ENCODE measurements at regions of chr17 and their contacts with region 1.

Region 1: GRCh38 chr17:43211480-43212402 is at the start of gene TMEM106A:
- DNase-seq: peak; percentile 80
- ATAC-seq: peak; percentile 90
- H3K4me3 Mint-ChIP-seq: peak within 1 kb of the TSS; percentile 98
- H3K27ac Mint-ChIP-seq: peak within 1 kb of the TSS; percentile 94
- H3K4me1 Mint-ChIP-seq: peaks cover 18% of the 10 kb centered on the region
- H3K27me3 Mint-ChIP-seq: no peaks in the 10 kb centered on the region
- total RNA-seq, gene TMEM106A: 20.3 TPM

Region 2: GRCh38 chr17:42985225-42985624 is 226.5 kb before region 1 on chr17:
- POLR2A ChIA-PET with region 1: no interaction called
- DNase-seq: no peak
- ATAC-seq: no peak
- H3K4me3 Mint-ChIP-seq: no peak overlapping the region
- H3K27ac Mint-ChIP-seq: no peak overlapping the region
- H3K4me1 Mint-ChIP-seq: peaks cover 24% of the 10 kb centered on the region
- H3K27me3 Mint-ChIP-seq: no peaks in the 10 kb centered on the region

Region 3: GRCh38 chr17:43042025-43042628 is 169.6 kb before region 1 on chr17:
- POLR2A ChIA-PET with region 1: no interaction called
- DNase-seq: no peak
- ATAC-seq: no peak
- H3K4me3 Mint-ChIP-seq: no peak overlapping the region
- H3K27ac Mint-ChIP-seq: peak overlapping the region; percentile 17
- H3K4me1 Mint-ChIP-seq: no peaks in the 10 kb centered on the region
- H3K27me3 Mint-ChIP-seq: no peaks in the 10 kb centered on the region

Region 4: DNA sequence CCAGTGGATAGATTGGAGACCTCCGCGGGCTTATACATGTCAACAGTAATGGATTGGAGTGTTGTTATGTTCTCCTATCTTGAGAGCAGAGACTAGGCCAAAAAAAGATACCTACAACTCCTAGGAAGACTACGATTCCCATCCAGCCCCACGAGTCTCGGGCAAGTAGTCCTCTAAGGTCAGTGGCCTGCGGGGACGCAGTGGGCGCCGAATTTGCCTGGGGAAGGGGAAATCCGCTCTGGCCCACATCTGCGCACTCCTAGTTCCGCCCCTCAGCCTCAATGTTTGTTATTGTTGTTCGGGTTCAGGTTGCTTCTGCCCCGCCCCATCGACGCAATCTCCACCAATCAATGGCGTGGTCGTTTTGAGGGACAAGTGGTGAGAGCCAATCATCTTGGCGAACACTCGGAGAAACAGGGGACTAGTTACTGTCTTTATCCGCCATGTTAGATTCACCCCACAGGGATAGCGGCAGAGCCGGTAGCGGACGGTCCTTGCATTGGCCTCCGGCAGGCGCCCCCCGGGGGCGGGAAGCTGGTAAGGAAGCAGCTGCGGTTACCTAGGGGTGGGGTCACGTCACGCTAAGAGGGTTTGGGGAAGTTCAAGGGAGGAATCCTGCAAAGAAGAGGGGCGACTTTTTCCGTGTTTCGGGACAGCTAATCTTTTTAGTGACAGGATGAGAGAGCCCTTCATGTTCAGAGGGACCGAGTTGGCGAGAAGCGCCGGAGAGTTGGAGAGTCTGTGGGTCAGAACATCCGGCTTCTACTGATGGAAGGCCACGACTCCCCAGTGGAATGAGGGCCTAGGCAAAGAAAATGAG is 40.8 kb before region 1 on chr17 and contains the start of gene NBR1:
- POLR2A ChIA-PET with region 1: interaction called, 28 read pairs
- DNase-seq: peak; percentile 89
- ATAC-seq: peak; percentile 86
- H3K4me3 Mint-ChIP-seq: no peak within 1 kb of the TSS
- H3K27ac Mint-ChIP-seq: no peak within 1 kb of the TSS
- H3K4me1 Mint-ChIP-seq: peaks cover 30% of the 10 kb centered on the region
- H3K27me3 Mint-ChIP-seq: no peaks in the 10 kb centered on the region
- total RNA-seq, gene NBR1: 60.5 to 67.4 TPM